Mammary epithelial cell (primary cell): ENCODE measurements at regions of chr12 and their contacts with region 1.

Region 1: GRCh38 chr12:49515266-49515665 is 23.6 kb upstream of the KCNH3 start:
- DNase-seq: peak; percentile 73
- H3K4me3 ChIP-seq: no peak overlapping the region
- H3K27ac ChIP-seq: peak overlapping the region; percentile 44
- H3K4me1 ChIP-seq: peaks cover 23% of the 10 kb centered on the region
- H3K27me3 ChIP-seq: no peaks in the 10 kb centered on the region
- CTCF ChIP-seq: no peak

Region 2: DNA sequence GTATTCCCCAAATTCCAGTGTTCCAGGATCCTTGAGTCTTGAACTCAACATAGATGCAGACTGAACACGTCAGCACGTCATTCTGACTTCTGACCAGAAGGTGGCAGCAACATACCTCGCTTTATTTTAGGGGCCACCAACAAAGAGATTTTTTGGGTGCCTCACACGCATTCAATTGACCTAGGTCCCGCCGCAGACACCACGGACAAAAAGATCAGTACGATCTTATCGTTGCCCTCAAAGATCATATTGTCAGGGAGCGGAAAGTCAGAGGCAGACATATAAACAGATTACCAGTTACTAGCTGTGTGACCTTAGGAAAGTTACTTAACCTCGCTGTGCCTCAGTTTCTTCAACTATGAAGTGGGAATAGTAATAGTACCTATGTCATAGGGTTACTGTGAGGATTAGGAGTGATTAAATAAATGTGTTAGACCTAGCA is 226.8 kb before region 1 on chr12:
- CTCF ChIA-PET with region 1: interaction called, 4 read pairs
- dilution Hi-C with region 1: no loop called
- in situ Hi-C with region 1: loop called in 1 of 2 experiments (anchors 5 kb)
- intact Hi-C with region 1: loop called (anchors 1 kb)
- DNase-seq: peak; percentile 45
- H3K4me3 ChIP-seq: no peak overlapping the region
- H3K27ac ChIP-seq: no peak overlapping the region
- H3K4me1 ChIP-seq: peaks cover 11% of the 10 kb centered on the region
- H3K27me3 ChIP-seq: no peaks in the 10 kb centered on the region
- CTCF ChIP-seq: peak; percentile 78 to 80

Region 3: DNA sequence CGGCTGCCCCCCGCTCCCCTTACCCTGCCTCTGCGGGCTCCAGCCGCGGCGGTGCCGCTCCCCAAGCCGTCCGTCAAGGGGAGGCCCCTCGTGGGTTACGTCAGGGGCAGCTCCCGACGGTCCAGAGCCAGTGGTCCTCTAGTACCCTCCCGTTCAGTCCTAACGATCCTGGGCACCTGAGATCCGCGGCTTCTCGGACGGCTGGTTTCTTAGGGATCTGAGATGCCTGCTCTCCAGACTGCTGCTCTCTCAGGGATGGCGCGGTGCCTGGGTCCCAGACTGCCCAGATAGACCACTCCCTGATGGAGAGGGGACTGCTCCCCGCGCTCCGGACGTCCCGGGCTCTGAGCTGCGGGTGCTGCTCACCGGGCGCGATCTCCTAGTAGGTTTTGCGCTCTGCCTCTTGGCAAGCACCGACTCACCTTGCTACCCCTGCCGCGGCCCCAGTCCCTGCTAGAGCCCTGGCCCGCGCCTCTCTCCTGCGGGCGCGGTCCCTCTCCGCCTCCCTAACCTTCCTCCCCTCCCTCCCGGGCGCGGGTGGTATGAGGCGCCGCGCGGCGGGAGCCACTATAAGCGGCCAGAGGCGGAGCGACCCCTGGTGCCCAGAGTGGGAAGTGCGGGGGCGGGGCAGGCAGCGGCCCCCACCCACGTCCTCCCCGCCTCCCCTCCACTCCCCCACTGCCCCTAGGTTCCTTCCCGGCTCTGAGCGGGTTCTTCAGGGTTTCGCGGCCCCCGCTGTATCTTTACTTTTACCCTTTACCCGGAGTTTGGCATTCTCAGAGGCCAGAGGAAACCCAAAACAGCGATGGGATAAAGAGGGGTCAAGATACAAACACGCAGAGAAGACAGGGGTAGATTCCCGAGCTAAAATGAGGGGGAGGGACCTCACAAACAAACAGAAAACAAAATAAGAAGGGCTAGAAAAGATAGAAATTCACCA is 178.4 kb before region 1 on chr12 and contains the start of gene C1QL4:
- CTCF ChIA-PET with region 1: no interaction called
- dilution Hi-C with region 1: no loop called
- in situ Hi-C with region 1: loop called in 1 of 2 experiments (anchors 10 kb)
- intact Hi-C with region 1: no loop called
- DNase-seq: peak; percentile 50
- H3K4me3 ChIP-seq: peak within 1 kb of the TSS; percentile 41 to 57 (median 46)
- H3K27ac ChIP-seq: no peak within 1 kb of the TSS
- H3K4me1 ChIP-seq: peaks cover 8% of the 10 kb centered on the region
- H3K27me3 ChIP-seq: no peaks in the 10 kb centered on the region
- CTCF ChIP-seq: peak; percentile 51 to 94
- total RNA-seq, gene C1QL4: 0.24 TPM in 1 of 2 donors, not detected in the other

Region 4: GRCh38 chr12:49366652-49367380 is 148.4 kb before region 1 on chr12:
- CTCF ChIA-PET with region 1: interaction called, 6 read pairs
- dilution Hi-C with region 1: no loop called
- in situ Hi-C with region 1: no loop called
- intact Hi-C with region 1: loop called (anchors 2 kb)
- DNase-seq: peak; percentile 94
- H3K4me3 ChIP-seq: peak overlapping the region; percentile 65 to 73 (median 72)
- H3K27ac ChIP-seq: peak overlapping the region; percentile 77
- H3K4me1 ChIP-seq: peaks cover 28% of the 10 kb centered on the region
- H3K27me3 ChIP-seq: no peaks in the 10 kb centered on the region
- CTCF ChIP-seq: peak in 1 of 2 donors; percentile 28

Region 5: DNA sequence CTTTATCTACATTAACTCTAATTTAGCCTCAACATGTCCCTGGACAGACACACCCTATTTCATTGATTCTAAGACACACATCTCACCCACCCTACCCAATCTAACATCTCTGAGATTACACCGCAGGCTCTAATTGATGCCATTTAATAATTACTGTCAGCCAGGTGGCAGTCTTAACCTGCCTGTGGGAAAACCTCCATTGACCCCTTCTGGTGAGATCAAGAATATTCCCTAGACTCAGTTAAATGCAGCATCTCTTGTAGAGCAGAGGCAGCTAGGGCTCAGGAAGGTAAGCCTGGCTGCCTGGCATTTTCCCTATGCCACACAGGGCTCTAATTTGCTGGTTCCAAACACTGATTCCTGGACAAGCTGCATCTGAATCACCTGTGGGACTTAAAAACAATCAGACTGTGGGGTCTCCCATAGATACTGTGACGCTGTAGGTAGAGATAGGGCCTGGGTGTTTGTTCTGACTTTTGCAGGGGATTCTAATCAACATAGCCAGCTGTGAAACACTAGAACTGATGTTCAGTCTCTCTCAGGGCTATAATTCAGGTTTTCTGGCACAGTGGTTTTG is 38.3 kb after region 1 on chr12:
- CTCF ChIA-PET with region 1: no interaction called
- dilution Hi-C with region 1: loop called (anchors 5 kb)
- in situ Hi-C with region 1: no loop called
- intact Hi-C with region 1: loop called (anchors 1 kb)
- DNase-seq: peak; percentile 48
- H3K4me3 ChIP-seq: no peak overlapping the region
- H3K27ac ChIP-seq: no peak overlapping the region
- H3K4me1 ChIP-seq: peaks cover 13% of the 10 kb centered on the region
- H3K27me3 ChIP-seq: no peaks in the 10 kb centered on the region
- CTCF ChIP-seq: peak; percentile 78 to 85